PC-3 (cell line): ENCODE measurements at regions of chr21 and their contacts with region 1.

Region 1: GRCh38 chr21:44939532-44940115 is at the start of gene SLX9:
- DNase-seq: peak; percentile 90
- ATAC-seq: peak; percentile 83
- H3K4me3 ChIP-seq: peak within 1 kb of the TSS; percentile 95
- H3K27ac ChIP-seq: peak within 1 kb of the TSS; percentile 61
- H3K4me1 ChIP-seq: peaks cover 30% of the 10 kb centered on the region
- H3K27me3 ChIP-seq: no peaks in the 10 kb centered on the region
- CTCF ChIP-seq: no peak
- total RNA-seq, gene SLX9: 80.1 and 94.9 TPM in 2 replicates

Region 2: GRCh38 chr21:44892536-44893277 is 46.9 kb before region 1 on chr21:
- CTCF ChIA-PET with region 1: no interaction called
- POLR2A ChIA-PET with region 1: interaction called, 11 read pairs
- intact Hi-C with region 1: no loop called
- DNase-seq: peak; percentile 70
- ATAC-seq: peak; percentile 86
- H3K4me3 ChIP-seq: no peak overlapping the region
- H3K27ac ChIP-seq: no peak overlapping the region
- H3K4me1 ChIP-seq: no peaks in the 10 kb centered on the region
- H3K27me3 ChIP-seq: no peaks in the 10 kb centered on the region
- CTCF ChIP-seq: peak; percentile 96

Region 3: GRCh38 chr21:45074048-45074817 is 134.6 kb after region 1 on chr21 and contains the start of gene ADARB1:
- CTCF ChIA-PET with region 1: interaction called, 3 read pairs
- POLR2A ChIA-PET with region 1: no interaction called
- intact Hi-C with region 1: loop called (anchors 10 kb)
- DNase-seq: peak; percentile 62
- ATAC-seq: peak; percentile 46
- H3K4me3 ChIP-seq: peak within 1 kb of the TSS; percentile 88
- H3K27ac ChIP-seq: peak within 1 kb of the TSS; percentile 41
- H3K4me1 ChIP-seq: peaks cover 21% of the 10 kb centered on the region; the same call in 1 of the 2 replicates
- H3K27me3 ChIP-seq: no peaks in the 10 kb centered on the region
- CTCF ChIP-seq: no peak
- total RNA-seq, gene ADARB1: 14.1 and 21.0 TPM in 2 replicates